Activated CD8-positive, alpha-beta memory T cell treated with anti-CD3 and anti-CD28 coated beads, Interleukin-2, amount 10 ng/mL, durations not matched to agents 7 days and 5 days (primary cell): ENCODE measurements at regions of chr7 and their contacts with region 1.

Region 1: DNA sequence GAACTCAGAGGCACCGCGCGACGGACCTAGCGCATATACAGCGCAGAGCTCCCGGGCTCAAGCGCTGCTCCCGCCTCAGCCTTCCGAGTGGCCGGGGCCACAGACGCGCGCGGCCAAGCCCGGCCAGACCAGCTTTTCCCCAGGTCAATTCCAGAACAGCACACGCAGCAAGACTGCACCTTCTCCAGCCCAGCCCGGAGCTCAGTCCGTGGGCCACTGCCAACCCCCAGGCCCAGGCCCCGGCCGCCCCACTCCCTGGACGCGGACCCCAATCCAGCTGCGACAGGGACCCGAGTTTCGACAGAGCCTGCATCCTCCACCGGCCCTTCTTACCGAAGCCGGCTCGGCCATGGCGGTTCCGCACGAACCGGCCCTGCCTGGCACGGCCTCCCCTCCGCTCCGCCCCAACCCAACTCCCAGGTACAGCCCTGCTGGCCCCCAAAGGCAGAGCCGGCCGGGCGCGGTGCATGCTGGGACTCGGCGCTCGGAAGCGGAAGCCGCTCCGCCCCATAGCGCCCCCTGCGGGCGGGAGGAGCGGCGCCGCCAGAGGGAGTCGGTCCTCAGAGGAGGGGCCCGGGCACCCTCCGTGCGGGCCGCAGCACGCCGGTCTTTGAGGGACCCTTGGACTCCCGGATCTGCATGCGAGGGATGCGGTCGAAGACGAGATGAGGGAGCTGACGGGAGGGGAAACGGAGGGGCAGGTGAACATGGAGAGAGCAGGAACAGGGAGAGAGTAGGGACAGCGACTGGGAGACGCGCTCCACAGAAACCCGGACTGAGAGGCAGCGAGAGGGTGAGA is at the start of gene ZNF425:
- DNase-seq: peak; percentile 94
- ATAC-seq: peak; percentile 89
- H3K4me3 Mint-ChIP-seq: peak within 1 kb of the TSS; percentile 88
- H3K27ac Mint-ChIP-seq: peak within 1 kb of the TSS; percentile 99
- H3K4me1 Mint-ChIP-seq: peaks cover 22% of the 10 kb centered on the region
- H3K27me3 Mint-ChIP-seq: no peaks in the 10 kb centered on the region
- total RNA-seq, gene ZNF425: 0.53 to 0.91 TPM

Region 2: DNA sequence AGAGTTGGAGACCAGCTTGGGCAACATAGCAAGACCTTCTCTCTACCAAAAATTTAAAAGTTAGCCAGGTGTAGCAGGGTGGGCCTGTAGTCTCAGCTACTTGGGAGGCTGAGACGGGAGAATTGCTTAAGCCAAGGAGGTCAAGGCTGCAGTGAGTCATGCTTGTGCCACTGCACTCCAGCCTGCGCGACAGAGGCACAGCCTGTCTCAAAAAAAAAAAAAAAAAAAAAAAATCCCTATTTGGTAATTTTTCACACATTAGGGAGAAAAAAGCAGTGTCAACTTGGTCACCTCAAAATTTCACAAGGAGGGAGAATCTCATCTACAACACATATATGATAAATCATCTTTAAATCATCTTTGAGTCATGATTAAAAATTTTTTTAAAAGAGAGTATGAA is 14.8 kb after region 1 on chr7:
- CTCF ChIA-PET with region 1: interaction called, 61 read pairs
- DNase-seq: no peak
- ATAC-seq: no peak
- H3K4me3 Mint-ChIP-seq: no peak overlapping the region
- H3K27ac Mint-ChIP-seq: no peak overlapping the region
- H3K4me1 Mint-ChIP-seq: peaks cover 10% of the 10 kb centered on the region
- H3K27me3 Mint-ChIP-seq: no peaks in the 10 kb centered on the region

Region 3: DNA sequence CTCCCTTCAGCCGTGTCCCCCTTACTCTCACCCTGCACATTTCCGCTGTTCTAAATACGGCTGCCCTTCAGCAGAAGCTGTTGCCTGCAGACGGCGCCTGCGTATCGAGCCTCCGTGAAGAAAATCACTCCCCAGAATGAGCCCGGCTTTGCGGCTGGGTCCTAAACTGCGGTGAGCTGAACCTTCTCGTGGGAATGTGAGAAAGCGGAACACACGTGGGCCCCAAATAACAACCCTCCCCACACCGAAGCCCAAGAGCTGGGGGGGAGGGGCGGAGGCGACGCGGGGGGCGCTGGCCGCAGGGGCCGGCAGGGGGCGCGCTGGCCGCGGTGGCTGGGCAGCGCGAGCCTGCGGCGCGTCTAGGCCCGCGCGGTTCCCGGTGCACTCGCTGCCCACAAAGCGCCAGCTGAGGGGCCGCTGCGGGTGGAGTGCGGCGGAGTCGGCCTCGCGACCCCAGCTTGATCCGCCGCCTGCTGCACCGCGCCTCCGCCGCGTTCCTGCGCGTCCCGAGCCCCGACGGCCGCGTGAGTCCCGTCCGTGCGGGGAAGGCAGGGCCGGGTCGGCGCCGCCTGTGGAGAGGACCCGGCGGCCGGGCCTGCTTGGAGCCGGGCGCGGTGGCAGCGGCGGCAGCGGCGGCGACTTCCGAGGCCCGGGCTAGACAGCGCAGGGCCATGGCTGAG is 21.1 kb after region 1 on chr7 and contains the start of gene ZNF398:
- CTCF ChIA-PET with region 1: interaction called, 61 read pairs
- DNase-seq: peak; percentile 79
- ATAC-seq: peak; percentile 82
- H3K4me3 Mint-ChIP-seq: peak within 1 kb of the TSS; percentile 90
- H3K27ac Mint-ChIP-seq: peak within 1 kb of the TSS; percentile 88
- H3K4me1 Mint-ChIP-seq: peaks cover 29% of the 10 kb centered on the region
- H3K27me3 Mint-ChIP-seq: no peaks in the 10 kb centered on the region
- total RNA-seq, gene ZNF398: 12.1 to 13.2 TPM